ENCODE measurements at regions of chr3 and their contacts with region 1.

Region 1: GRCh38 chr3:23676093-23676492 is 129.7 kb upstream of the UBE2E1 start:
- DNase-seq: peak; percentile 74
- ATAC-seq: peak; percentile 77
- H3K4me3 ChIP-seq: no peak overlapping the region
- H3K27ac ChIP-seq: no peak overlapping the region
- H3K4me1 ChIP-seq: no peaks in the 10 kb centered on the region
- H3K27me3 ChIP-seq: no peaks in the 10 kb centered on the region
- CTCF ChIP-seq: 0 out of 2 replicates have a peak, but pooled peaks have one; percentile 1
- POLR2A ChIP-seq: no peak
- RAD21 ChIP-seq: peak; percentile 15; the same call in 1 of the 2 replicates

Region 2: GRCh38 chr3:22937536-22937935 is 738.6 kb before region 1 on chr3:
- CTCF ChIA-PET with region 1: no interaction called
- POLR2A ChIA-PET with region 1: no interaction called
- dilution Hi-C with region 1: no loop called
- in situ Hi-C with region 1: no loop called
- intact Hi-C with region 1: no loop called
- DNase-seq: peak; percentile 16
- ATAC-seq: peak; percentile 82
- H3K4me3 ChIP-seq: no peak overlapping the region
- H3K27ac ChIP-seq: no peak overlapping the region
- H3K4me1 ChIP-seq: no peaks in the 10 kb centered on the region
- H3K27me3 ChIP-seq: no peaks in the 10 kb centered on the region
- CTCF ChIP-seq: no peak
- POLR2A ChIP-seq: no peak
- RAD21 ChIP-seq: no peak

Region 3: DNA sequence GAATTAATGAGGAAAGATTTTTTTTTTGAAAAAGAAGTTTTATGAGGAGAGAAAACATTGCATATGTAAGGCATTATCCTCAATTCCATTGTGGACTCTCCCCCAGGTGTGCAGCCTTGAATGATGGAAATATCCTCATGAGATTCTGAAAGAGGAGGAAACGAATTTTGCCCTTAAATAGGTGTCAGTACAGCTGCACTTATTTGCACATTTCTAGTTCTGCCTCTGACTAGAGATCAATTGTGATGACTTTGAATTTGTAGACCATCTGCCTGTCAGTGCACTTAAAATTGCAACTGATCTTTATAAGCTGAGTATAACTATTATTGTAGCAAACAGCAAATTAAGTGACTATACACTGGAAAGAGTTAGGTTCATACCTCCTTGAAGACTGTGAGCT is 331.2 kb before region 1 on chr3:
- CTCF ChIA-PET with region 1: no interaction called
- POLR2A ChIA-PET with region 1: no interaction called
- dilution Hi-C with region 1: no loop called
- in situ Hi-C with region 1: no loop called
- intact Hi-C with region 1: no loop called
- DNase-seq: no peak
- ATAC-seq: no peak
- H3K4me3 ChIP-seq: no peak overlapping the region
- H3K27ac ChIP-seq: no peak overlapping the region
- H3K4me1 ChIP-seq: no peaks in the 10 kb centered on the region
- H3K27me3 ChIP-seq: no peaks in the 10 kb centered on the region
- CTCF ChIP-seq: no peak
- POLR2A ChIP-seq: no peak
- RAD21 ChIP-seq: no peak

Region 4: DNA sequence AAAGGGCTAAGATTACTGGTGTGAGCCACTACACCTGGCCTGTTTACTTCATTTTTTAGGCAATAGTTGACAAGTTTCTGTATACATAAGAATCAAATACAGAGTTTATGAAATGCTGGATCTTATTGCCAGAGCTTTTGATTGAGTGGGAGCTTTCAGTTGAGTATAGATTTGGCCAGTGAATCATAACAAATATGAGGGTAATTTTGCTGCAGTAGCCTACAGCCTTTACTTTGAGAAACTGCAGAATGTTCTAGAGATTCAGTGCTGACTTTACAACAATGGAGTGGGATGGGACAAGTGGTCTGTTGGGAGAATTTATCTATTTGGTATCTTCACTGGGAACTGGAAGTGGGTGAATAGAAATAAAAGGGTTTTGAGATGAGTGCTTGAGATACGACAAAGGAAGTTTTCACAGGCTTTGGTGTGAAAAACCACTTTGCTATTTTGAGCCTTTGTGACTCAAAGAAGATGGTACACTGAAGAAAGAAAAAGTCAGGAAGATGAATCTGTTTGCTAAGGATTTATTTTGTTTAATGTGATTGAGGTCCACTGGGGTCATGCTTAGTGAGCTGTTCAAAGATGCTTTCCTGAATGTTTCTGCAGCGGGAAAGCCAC is 245.2 kb before region 1 on chr3:
- CTCF ChIA-PET with region 1: no interaction called
- POLR2A ChIA-PET with region 1: no interaction called
- dilution Hi-C with region 1: no loop called
- in situ Hi-C with region 1: no loop called
- intact Hi-C with region 1: no loop called
- DNase-seq: peak; percentile 34
- ATAC-seq: no peak
- H3K4me3 ChIP-seq: no peak overlapping the region
- H3K27ac ChIP-seq: no peak overlapping the region
- H3K4me1 ChIP-seq: peaks cover 5% of the 10 kb centered on the region; the same call in 1 of the 2 replicates
- H3K27me3 ChIP-seq: no peaks in the 10 kb centered on the region
- CTCF ChIP-seq: no peak
- POLR2A ChIP-seq: no peak
- RAD21 ChIP-seq: no peak

Region 5: GRCh38 chr3:23785097-23785645 is 109.1 kb after region 1 on chr3:
- CTCF ChIA-PET with region 1: no interaction called
- POLR2A ChIA-PET with region 1: interaction called, 12 read pairs
- dilution Hi-C with region 1: no loop called
- in situ Hi-C with region 1: no loop called
- intact Hi-C with region 1: no loop called
- DNase-seq: no peak
- ATAC-seq: no peak
- H3K4me3 ChIP-seq: no peak overlapping the region
- H3K27ac ChIP-seq: no peak overlapping the region
- H3K4me1 ChIP-seq: no peaks in the 10 kb centered on the region
- H3K27me3 ChIP-seq: peaks cover 18% of the 10 kb centered on the region
- CTCF ChIP-seq: no peak
- POLR2A ChIP-seq: no peak
- RAD21 ChIP-seq: no peak